ENCODE measurements at regions of chr16 and their contacts with region 1.

Region 1: GRCh38 chr16:77675464-77676324 is 46.6 kb upstream of the NUDT7 start:
- DNase-seq: peak; percentile 37
- ATAC-seq: peak; percentile 83

Region 2: GRCh38 chr16:77732241-77732946 is 56.7 kb after region 1 on chr16:
- intact Hi-C with region 1: no loop called
- DNase-seq: no peak
- ATAC-seq: no peak

Region 3: GRCh38 chr16:77971306-77972271 is 295.9 kb after region 1 on chr16:
- intact Hi-C with region 1: loop called (anchors 2 kb)
- DNase-seq: peak; percentile 89
- ATAC-seq: peak; percentile 92

Region 4: DNA sequence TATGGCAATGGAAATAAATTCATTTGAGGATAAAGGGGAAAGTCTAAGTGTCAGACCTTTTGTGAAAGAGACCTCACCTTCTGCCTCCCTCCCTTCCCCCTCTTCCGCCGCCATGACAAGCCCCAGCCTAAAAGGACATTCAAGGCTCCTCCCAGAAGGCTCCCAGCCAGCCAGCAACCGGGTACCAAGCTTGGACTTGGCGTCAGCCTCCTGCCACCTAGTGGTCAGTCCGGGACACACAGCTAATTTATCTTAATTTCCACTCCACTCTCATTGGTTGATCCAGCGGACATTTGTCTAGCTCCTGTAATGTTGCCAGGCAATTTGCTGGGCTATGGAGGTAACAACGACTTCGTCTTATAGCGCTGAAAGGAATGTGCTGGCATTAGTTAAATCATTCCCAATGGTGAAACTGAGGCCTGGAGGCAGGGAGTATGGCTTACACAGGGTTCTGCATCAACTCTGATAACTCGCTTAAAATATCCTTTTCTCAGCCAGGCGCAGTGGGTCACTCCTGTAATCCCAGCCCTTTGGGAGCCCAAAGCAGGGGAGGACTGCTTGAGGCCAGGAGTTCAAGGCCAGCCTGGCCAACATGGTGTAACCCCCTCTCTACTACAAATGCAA is 327.3 kb after region 1 on chr16:
- intact Hi-C with region 1: loop called (anchors 10 kb)
- DNase-seq: peak; percentile 86
- ATAC-seq: peak; percentile 96

Region 5: GRCh38 chr16:78099372-78100161 is 423.9 kb after region 1 on chr16 and contains the start of gene WWOX:
- intact Hi-C with region 1: loop called (anchors 10 kb)
- DNase-seq: peak; percentile 97
- ATAC-seq: peak; percentile 96
- total RNA-seq, gene WWOX: 12.8 TPM

Measured in left ventricle myocardium superior (tissue), 1 donor.